Dorsolateral prefrontal cortex (tissue), 120 donors: ENCODE measurements at regions of chr6 and their contacts with region 1.

Region 1: GRCh38 chr6:157428427-157429202 is 47.6 kb downstream of the ZDHHC14 start:
- DNase-seq: peak in 1 of 10 donors; percentile 60
- H3K4me3 ChIP-seq: peak overlapping the region in 22 of 59 donors; percentile 5 to 46 (median 18)
- H3K27ac ChIP-seq: peak overlapping the region in 23 of 59 donors; percentile 0 to 73 (median 31)
- H3K27me3 ChIP-seq: no peaks in the 10 kb centered on the region
- CTCF ChIP-seq: no peak

Region 2: GRCh38 chr6:157412791-157413190 is 15.8 kb before region 1 on chr6:
- intact Hi-C with region 1: loop called in 1 of 2 experiments (anchors 2 kb)
- DNase-seq: peak in 1 of 10 donors; percentile 72
- H3K4me3 ChIP-seq: peak overlapping the region in 7 of 59 donors; percentile 4 to 30 (median 19)
- H3K27ac ChIP-seq: peak overlapping the region in 22 of 59 donors; percentile 6 to 65 (median 34)
- H3K27me3 ChIP-seq: no peaks in the 10 kb centered on the region
- CTCF ChIP-seq: no peak

Region 3: DNA sequence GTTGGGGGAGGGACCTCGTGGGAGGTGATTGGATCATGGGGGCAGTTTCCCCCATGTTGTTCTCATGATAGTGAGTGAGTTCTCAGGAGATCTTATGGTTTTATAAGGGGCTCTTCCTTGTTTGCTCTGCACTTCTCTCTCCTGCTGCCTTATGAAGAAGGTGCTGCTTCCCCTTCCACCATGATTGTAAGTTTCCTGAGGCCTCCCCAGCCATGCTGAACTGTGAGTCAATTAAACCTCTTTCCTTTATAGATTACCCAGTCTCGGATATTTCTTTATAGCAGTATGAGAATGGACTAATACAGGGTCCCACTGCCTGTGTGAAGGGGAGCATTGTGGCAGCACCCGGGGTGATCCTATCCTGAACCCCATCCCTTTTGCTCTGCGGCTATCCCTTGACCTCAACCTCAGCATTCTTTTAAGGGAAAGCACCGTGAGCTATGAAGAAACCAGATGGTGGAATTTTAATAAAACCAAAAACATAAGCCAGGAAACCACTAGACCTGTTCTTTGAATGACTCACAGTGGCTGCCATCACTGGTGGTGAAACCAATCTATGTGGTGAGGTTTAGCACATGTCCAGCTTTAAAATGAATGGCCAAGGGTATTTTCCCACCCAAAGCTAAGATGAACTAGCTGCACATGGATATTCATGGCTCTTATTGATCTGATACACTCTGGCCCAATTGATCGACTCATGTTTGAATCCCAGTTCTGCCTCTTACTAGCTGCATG is 14.6 kb after region 1 on chr6:
- intact Hi-C with region 1: no loop called
- DNase-seq: no peak
- H3K4me3 ChIP-seq: no peak overlapping the region
- H3K27ac ChIP-seq: no peak overlapping the region
- H3K27me3 ChIP-seq: no peaks in the 10 kb centered on the region
- CTCF ChIP-seq: no peak

Region 4: DNA sequence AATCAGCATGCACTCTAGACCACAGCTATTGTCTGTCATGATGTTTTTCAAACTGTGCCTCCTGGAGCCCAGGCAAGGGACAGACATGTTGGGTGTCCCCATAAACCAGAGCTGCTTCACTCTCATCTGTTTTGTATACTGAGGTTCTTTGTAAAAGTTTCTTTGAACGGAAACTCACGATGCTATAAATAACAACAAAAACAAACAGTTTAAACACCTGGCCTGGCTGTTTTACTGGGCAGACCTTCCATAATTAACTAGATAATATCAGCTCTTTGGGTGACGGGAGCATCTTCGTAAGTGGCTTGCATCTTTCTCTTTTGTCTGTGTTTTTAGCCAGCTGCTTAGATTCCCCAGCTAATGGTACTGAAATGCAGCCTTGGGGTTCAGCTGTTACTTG is 142.7 kb after region 1 on chr6:
- intact Hi-C with region 1: no loop called
- DNase-seq: no peak
- H3K4me3 ChIP-seq: no peak overlapping the region
- H3K27ac ChIP-seq: no peak overlapping the region
- H3K27me3 ChIP-seq: no peaks in the 10 kb centered on the region
- CTCF ChIP-seq: no peak